Activated CD8-positive, alpha-beta memory T cell treated with anti-CD3 and anti-CD28 coated beads, Interleukin-2, amount 10 ng/mL, durations not matched to agents 7 days and 5 days (primary cell): ENCODE measurements at regions of chr16 and their contacts with region 1.

Region 1: DNA sequence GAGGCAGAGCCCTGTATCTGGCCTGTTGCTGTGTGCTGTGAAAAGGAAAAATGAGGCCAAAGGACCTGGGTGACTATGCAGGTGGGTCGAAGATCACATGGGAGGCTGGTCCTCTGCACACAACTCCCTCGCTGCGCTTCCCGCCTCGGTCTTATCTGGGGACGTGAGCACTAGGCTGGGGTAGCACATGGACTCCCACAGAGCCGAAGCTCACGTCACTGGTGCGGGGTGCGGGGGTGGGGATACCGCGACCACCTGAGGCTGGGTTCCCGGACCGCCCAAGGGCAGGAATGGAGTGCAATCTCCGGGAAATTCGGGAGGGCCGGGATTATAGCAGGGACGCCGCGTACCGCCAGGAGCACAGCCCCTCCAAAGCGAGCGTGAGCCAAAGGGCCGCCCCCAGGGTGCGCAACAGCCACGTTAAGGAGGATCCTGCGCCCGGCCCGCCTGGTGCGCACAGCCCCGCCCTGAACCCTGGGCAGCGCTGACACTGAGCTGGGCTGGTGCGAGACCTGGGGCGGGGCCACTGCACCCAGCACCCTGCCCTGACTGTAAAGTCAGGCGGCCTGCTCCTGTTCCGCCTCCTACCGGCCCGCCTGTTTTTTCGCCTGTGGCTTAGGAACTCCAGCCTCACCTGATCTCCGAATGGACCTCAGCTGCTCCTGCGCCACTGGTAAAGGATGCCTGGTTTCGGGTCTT is 4.8 kb downstream of the MT1A start:
- DNase-seq: peak; percentile 91
- ATAC-seq: peak; percentile 100
- H3K4me3 Mint-ChIP-seq: peak overlapping the region; percentile 60
- H3K27ac Mint-ChIP-seq: peak overlapping the region; percentile 47
- H3K4me1 Mint-ChIP-seq: peaks cover 23% of the 10 kb centered on the region
- H3K27me3 Mint-ChIP-seq: peaks cover 64% of the 10 kb centered on the region

Region 2: GRCh38 chr16:56481468-56482112 is 161.6 kb before region 1 on chr16:
- CTCF ChIA-PET with region 1: no interaction called
- DNase-seq: no peak
- ATAC-seq: no peak
- H3K4me3 Mint-ChIP-seq: no peak overlapping the region
- H3K27ac Mint-ChIP-seq: no peak overlapping the region
- H3K4me1 Mint-ChIP-seq: peaks cover 11% of the 10 kb centered on the region
- H3K27me3 Mint-ChIP-seq: no peaks in the 10 kb centered on the region

Region 3: DNA sequence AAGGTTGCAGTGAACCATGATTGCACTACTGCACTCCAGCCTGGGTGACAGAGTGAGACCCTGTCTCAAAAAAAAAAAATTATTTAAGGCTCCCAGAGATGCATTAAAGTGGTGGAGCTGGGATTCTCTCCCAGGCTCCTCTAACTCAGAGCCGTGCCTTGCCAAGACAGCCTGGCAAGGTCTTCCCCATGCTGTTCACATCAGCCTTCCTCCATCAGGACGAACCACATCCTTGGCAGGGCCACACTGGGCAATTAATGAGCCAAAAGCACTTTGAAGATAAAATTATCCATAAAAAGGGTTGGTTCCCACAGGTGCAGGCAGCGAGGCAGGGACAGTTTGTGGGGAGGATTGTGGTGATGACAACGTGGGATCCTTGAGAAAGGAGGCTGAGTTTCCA is 103.6 kb before region 1 on chr16:
- CTCF ChIA-PET with region 1: no interaction called
- DNase-seq: no peak
- ATAC-seq: no peak
- H3K4me3 Mint-ChIP-seq: no peak overlapping the region
- H3K27ac Mint-ChIP-seq: no peak overlapping the region
- H3K4me1 Mint-ChIP-seq: no peaks in the 10 kb centered on the region
- H3K27me3 Mint-ChIP-seq: peaks cover 37% of the 10 kb centered on the region

Region 4: DNA sequence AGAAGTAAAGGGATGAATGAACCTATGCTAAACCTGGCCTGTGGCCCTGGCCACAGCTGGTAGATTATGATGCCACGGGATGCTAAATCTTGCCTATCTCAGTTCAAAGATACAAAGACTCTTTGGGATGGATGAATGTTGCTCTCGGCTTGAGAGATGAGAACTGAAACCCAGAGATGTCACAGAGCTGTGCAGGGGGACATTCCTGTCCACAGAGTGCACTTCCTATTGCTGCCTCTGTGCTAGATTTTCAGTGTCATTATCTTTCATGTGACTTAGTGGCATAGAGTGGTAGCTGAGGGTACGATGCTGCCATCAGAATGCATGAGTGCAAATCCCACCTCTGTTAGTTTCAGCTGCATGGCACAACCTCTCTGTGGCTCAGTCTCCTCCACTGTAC is 13.1 kb before region 1 on chr16:
- CTCF ChIA-PET with region 1: interaction called, 10 read pairs
- DNase-seq: no peak
- ATAC-seq: no peak
- H3K4me3 Mint-ChIP-seq: no peak overlapping the region
- H3K27ac Mint-ChIP-seq: no peak overlapping the region
- H3K4me1 Mint-ChIP-seq: peaks cover 40% of the 10 kb centered on the region
- H3K27me3 Mint-ChIP-seq: peaks cover 72% of the 10 kb centered on the region

Region 5: GRCh38 chr16:56657555-56658326 is 14.5 kb after region 1 on chr16 and contains the start of gene MT1F:
- CTCF ChIA-PET with region 1: interaction called, 22 read pairs
- DNase-seq: peak; percentile 87
- ATAC-seq: peak; percentile 91
- H3K4me3 Mint-ChIP-seq: peak within 1 kb of the TSS; percentile 90
- H3K27ac Mint-ChIP-seq: peak within 1 kb of the TSS; percentile 88
- H3K4me1 Mint-ChIP-seq: peaks cover 27% of the 10 kb centered on the region
- H3K27me3 Mint-ChIP-seq: peaks cover 9% of the 10 kb centered on the region
- total RNA-seq, gene MT1F: 11.4 to 20.6 TPM

Region 6: DNA sequence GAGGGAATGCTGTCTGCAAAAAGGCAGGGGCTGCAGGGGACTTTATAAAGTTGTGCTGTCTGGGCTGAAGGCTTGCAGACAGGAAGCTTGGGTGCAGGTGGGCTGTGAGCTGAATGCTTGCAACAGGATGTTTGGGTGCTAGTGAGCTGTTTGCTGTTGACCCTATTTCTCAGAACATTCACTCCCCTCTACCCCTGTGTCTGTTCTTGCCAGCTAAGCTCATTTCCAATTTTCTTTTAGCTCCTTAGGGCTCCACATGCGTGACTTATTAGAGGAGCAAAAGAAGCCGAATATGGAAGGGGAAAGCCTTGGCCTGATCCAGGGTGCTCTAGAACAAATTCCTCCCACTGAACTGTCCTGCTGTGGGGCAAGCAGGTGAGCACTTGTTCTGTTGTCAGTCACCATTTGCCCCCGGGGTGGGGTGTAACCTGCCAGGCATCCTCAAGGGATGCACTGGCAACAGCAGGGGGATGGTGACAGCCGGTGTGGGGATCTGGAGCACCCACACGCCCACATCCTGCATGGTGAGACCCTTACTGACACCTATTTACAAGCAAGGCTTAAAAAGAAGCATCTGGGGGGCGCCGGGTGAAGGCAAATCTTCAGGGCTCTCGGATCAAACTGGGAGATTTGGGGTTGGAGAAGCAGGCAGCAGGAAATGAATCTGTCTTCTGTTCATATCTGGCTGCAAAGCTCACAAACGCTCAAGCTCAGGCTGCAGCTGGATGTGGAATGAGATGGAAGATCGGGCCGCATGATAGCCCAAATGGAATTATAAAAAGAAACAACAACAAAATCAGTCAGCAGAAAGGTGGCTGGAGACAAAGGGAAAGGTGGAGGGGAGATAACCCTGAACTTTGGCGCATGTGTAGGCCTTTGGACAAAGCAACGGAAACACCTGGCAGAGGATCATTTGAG is 65.6 kb after region 1 on chr16:
- CTCF ChIA-PET with region 1: interaction called, 16 read pairs
- DNase-seq: peak; percentile 79
- ATAC-seq: peak; percentile 83
- H3K4me3 Mint-ChIP-seq: peak overlapping the region; percentile 85
- H3K27ac Mint-ChIP-seq: peak overlapping the region; percentile 93
- H3K4me1 Mint-ChIP-seq: peaks cover 44% of the 10 kb centered on the region
- H3K27me3 Mint-ChIP-seq: no peaks in the 10 kb centered on the region

Region 7: GRCh38 chr16:56753410-56753809 is 110.2 kb after region 1 on chr16:
- CTCF ChIA-PET with region 1: no interaction called
- DNase-seq: no peak
- ATAC-seq: no peak
- H3K4me3 Mint-ChIP-seq: no peak overlapping the region
- H3K27ac Mint-ChIP-seq: no peak overlapping the region
- H3K4me1 Mint-ChIP-seq: peaks cover 19% of the 10 kb centered on the region
- H3K27me3 Mint-ChIP-seq: no peaks in the 10 kb centered on the region

Region 8: GRCh38 chr16:56898847-56899246 is 255.6 kb after region 1 on chr16:
- CTCF ChIA-PET with region 1: no interaction called
- DNase-seq: peak; percentile 62
- ATAC-seq: peak; percentile 71
- H3K4me3 Mint-ChIP-seq: no peak overlapping the region
- H3K27ac Mint-ChIP-seq: no peak overlapping the region
- H3K4me1 Mint-ChIP-seq: peaks cover 27% of the 10 kb centered on the region
- H3K27me3 Mint-ChIP-seq: peaks cover 58% of the 10 kb centered on the region